Tibial artery (tissue), 4 donors: ENCODE measurements at regions of chr3 and their contacts with region 1.

Region 1: DNA sequence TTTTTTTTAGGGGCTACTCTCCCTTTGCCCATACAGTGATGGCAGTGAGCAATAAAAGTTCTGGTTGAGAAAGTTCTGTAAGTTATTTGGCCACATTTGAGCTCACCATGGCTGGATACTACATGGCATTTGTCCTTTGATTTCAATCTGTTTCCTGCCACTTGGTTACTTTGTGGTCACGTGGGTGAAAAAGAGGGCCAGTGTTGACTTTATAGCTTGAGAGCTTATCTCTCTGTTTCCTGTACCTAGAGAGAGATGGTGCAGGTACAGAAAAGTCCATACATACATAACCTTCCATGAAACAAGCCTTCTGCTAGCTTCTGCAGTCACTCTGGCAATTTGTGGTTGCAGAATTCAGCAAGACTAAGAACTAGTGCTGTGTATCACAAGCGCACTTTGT is 23.4 kb upstream of the MECOM start:
- DNase-seq: no peak
- H3K4me3 ChIP-seq: no peak overlapping the region
- H3K27ac ChIP-seq: no peak overlapping the region
- H3K4me1 ChIP-seq: no peaks in the 10 kb centered on the region
- H3K27me3 ChIP-seq: no peaks in the 10 kb centered on the region
- CTCF ChIP-seq: no peak

Region 2: GRCh38 chr3:169203631-169204550 is 483.0 kb before region 1 on chr3:
- intact Hi-C with region 1: loop called (anchors 5 kb)
- DNase-seq: no peak
- H3K4me3 ChIP-seq: no peak overlapping the region
- H3K27ac ChIP-seq: no peak overlapping the region
- H3K4me1 ChIP-seq: no peaks in the 10 kb centered on the region
- H3K27me3 ChIP-seq: no peaks in the 10 kb centered on the region
- CTCF ChIP-seq: no peak

Region 3: GRCh38 chr3:169759256-169759655 is 72.4 kb after region 1 on chr3:
- intact Hi-C with region 1: no loop called
- DNase-seq: no peak
- H3K4me3 ChIP-seq: no peak overlapping the region
- H3K27ac ChIP-seq: no peak overlapping the region
- H3K4me1 ChIP-seq: peaks cover 0 to 10% (median 3%) of the 10 kb centered on the region in 4 donors
- H3K27me3 ChIP-seq: peaks cover 0 to 9% of the 10 kb centered on the region in 2 donors
- CTCF ChIP-seq: no peak